ENCODE measurements at regions of chr4 and their contacts with region 1.

Region 1: DNA sequence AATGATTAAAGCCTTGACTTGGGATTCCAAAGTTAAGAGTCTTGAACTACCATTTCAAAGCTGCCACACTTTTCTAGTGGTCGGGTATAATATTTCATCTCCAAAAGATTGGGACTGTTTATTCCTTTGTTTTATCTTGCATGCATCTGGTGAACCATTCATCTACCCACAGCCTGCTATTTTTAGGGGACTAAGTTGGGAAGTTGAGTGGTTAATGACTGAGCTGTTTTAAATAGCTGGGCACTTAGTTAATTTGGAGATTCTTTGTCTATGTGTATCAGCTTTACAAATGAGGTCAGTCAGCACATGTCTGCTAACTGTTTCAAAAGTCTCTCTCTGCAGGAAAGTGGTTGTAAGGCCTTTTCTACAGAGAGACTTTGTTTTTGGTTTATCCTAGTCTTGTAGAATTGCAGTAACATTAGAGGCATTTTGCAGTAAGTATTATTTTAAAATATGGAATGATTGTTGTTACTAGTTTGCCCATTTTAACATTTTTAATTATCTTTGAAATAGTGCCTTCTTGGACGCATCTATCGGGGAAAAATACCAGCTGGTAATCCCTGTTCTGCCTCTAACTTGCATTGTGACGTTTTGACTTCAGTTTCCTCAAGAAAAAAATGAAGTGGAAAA is 8.2 kb downstream of the BMP2K start:
- DNase-seq: no peak
- ATAC-seq: peak; percentile 58

Region 2: GRCh38 chr4:78622253-78622979 is 161.9 kb before region 1 on chr4:
- intact Hi-C with region 1: loop called (anchors 10 kb)
- DNase-seq: no peak
- ATAC-seq: no peak

Region 3: GRCh38 chr4:79788884-79789283 is 1004.5 kb after region 1 on chr4:
- intact Hi-C with region 1: no loop called
- DNase-seq: no peak
- ATAC-seq: no peak

Measured in sciatic nerve (tissue), 2 donors.